ENCODE measurements at regions of chr12 and their contacts with region 1.

Region 1: GRCh38 chr12:121668750-121669520 is 519 bp downstream of the MORN3 start:
- DNase-seq: peak; percentile 51 to 57
- ATAC-seq: peak; percentile 41 to 57; a peak in 3 of 6 replicates
- H3K4me3 ChIP-seq: no peak overlapping the region
- H3K27ac ChIP-seq: no peak overlapping the region
- H3K4me1 ChIP-seq: peaks cover 12% of the 10 kb centered on the region
- CTCF ChIP-seq: peak; percentile 57
- EP300 ChIP-seq: no peak
- POLR2A ChIP-seq: no peak
- RAD21 ChIP-seq: peak; percentile 61 to 70

Region 2: GRCh38 chr12:121443193-121443870 is 225.6 kb before region 1 on chr12:
- CTCF ChIA-PET with region 1: no interaction called
- POLR2A ChIA-PET with region 1: no interaction called
- DNase-seq: peak; percentile 81 to 97
- ATAC-seq: peak; percentile 91 to 97
- H3K4me3 ChIP-seq: no peak overlapping the region
- H3K27ac ChIP-seq: peak overlapping the region in 1 of 2 experiments; percentile 52; a peak in 2 of 6 replicates
- H3K4me1 ChIP-seq: peaks cover 4% of the 10 kb centered on the region; the same call in 1 of the 3 replicates
- CTCF ChIP-seq: peak; percentile 84
- EP300 ChIP-seq: no peak
- POLR2A ChIP-seq: no peak
- RAD21 ChIP-seq: peak; percentile 76 to 84

Region 3: GRCh38 chr12:121637231-121637914 is 31.6 kb before region 1 on chr12:
- CTCF ChIA-PET with region 1: interaction called, 12 read pairs
- POLR2A ChIA-PET with region 1: no interaction called
- DNase-seq: no peak
- ATAC-seq: peak in 1 of 2 experiments; percentile 11; a peak in 1 of 6 replicates
- H3K4me3 ChIP-seq: no peak overlapping the region
- H3K27ac ChIP-seq: no peak overlapping the region
- H3K4me1 ChIP-seq: peaks cover 9% of the 10 kb centered on the region; the same call in 2 of the 3 replicates
- CTCF ChIP-seq: no peak
- EP300 ChIP-seq: no peak
- POLR2A ChIP-seq: no peak
- RAD21 ChIP-seq: no peak

Region 4: DNA sequence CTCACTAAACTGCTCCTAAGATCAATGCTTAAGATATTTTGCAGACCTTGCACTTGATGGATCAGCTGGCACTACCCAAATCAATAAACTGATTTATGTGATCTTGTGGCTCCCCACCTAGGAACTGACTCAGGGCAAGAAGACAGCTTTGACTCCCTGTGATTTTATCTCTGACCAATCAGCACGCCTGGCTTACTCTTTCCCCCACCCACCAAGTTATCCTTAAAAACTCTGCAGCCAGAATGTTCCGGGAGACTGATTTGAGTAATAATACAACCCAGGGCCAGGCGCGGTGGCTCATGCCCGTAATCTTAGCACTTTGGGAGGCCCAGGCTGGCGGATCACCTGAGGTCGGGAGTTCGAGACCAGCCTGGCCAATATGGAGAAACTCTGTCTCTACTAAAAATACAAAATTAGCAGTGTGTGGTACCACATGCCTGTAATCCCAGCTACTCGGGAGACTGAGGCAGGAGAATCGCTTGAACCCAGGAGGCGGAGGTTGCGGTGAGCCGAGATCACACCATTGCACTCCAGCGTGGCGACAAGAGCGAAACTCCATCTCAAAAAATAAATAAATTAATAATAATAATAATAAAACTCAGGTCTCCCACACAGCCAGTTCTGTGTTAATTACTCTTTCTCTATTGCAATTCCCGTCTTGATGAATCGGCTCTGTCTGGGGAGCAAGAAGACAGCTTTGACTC is 11.5 kb before region 1 on chr12:
- CTCF ChIA-PET with region 1: interaction called, 14 read pairs
- POLR2A ChIA-PET with region 1: no interaction called
- DNase-seq: no peak
- ATAC-seq: no peak
- H3K4me3 ChIP-seq: no peak overlapping the region
- H3K27ac ChIP-seq: no peak overlapping the region
- H3K4me1 ChIP-seq: no peaks in the 10 kb centered on the region
- CTCF ChIP-seq: no peak
- EP300 ChIP-seq: no peak
- POLR2A ChIP-seq: no peak
- RAD21 ChIP-seq: no peak

Region 5: DNA sequence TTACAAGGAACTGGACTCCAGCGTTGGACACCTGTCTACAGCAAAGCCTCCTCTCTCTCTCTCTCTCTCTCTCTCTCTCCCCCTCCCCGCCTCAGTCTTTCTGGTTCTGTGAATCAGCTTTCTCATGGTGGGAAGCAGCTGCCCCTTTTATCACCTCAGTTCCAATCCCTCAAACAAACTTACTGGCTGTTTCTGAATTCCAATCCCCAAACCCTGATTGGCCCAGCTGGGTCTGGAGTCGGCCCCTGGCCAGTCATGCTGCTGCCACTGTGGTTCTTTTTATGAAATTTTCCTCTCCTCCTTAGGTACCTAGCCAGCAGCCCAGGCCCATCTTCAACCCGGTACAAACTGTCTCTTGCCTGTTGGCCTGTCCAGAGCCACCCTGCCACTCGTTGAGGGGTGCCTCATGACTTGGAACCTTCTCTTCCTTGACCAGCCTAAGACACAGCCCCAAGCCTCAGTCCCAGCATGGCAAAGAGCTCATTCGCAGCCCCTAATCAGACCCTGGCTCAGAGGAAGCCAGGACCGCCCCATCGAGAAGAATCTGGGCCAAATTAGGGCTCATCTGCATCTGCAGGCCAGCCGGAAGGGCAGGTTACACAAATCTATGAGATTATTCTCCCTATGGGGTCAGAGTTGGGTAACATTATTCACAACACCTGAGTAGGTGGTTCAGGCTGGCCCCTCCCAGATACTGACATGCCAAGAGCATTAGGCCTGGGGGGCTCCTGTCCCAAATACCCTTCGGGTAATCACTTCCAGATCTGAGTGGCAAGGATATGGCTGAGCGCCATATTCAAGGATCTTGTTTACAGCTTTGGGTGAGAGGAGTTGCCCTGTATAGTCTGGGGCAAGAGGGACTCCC is 10.0 kb after region 1 on chr12:
- CTCF ChIA-PET with region 1: interaction called, 57 read pairs
- POLR2A ChIA-PET with region 1: no interaction called
- DNase-seq: no peak
- ATAC-seq: peak; percentile 13 to 21; a peak in 3 of 6 replicates
- H3K4me3 ChIP-seq: no peak overlapping the region
- H3K27ac ChIP-seq: no peak overlapping the region
- H3K4me1 ChIP-seq: no peaks in the 10 kb centered on the region
- CTCF ChIP-seq: no peak
- EP300 ChIP-seq: no peak
- POLR2A ChIP-seq: no peak
- RAD21 ChIP-seq: no peak